OCI-LY7 (cell line): ENCODE measurements at regions of chr12 and their contacts with region 1.

Region 1: GRCh38 chr12:123232807-123233543 is at the starts of genes MPHOSPH9 and MTRFR:
- DNase-seq: peak; percentile 100
- H3K4me3 ChIP-seq: peak within 1 kb of the TSS; percentile 94
- H3K27ac ChIP-seq: peak within 1 kb of the TSS; percentile 70
- H3K4me1 ChIP-seq: peaks cover 56% of the 10 kb centered on the region
- CTCF ChIP-seq: no peak
- total RNA-seq, gene MPHOSPH9: 136 and 166 TPM in 2 replicates
- total RNA-seq, gene MTRFR: 30.1 and 35.5 TPM in 2 replicates

Region 2: DNA sequence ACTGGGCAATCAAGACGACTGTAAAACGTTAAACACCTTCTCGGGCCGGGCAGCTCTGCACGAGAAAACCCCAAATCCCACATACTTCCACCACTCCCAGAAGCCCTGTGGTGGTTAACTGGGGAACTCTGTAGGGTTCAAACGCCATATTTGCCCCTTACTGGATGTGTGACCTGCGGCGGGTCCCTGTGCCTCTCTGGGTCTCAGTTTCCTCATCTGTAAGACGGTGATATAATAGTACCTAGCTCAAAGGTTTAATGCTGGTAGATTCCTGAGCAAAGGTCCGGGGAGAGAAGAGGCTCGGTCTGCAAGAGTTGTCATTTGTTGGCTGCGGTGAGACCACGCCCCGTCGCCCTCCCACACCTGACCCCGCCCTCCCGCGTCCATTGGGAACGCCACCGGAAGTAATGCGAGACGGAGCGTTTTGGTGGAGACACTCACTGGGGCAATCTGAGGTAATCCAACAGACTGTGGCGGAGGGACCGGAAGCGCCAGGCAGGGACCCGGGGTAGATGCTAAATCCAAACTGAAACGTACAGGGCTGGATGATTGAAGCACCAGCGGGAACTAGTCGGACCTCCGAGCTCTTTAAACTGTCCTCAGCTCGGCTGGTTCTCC is 258.6 kb before region 1 on chr12:
- CTCF ChIA-PET with region 1: no interaction called
- POLR2A ChIA-PET with region 1: interaction called, 17 read pairs
- intact Hi-C with region 1: loop called (anchors 2 kb)
- DNase-seq: peak; percentile 99
- H3K4me3 ChIP-seq: peak overlapping the region; percentile 76
- H3K27ac ChIP-seq: peak overlapping the region; percentile 89
- H3K4me1 ChIP-seq: peaks cover 30% of the 10 kb centered on the region
- CTCF ChIP-seq: no peak

Region 3: DNA sequence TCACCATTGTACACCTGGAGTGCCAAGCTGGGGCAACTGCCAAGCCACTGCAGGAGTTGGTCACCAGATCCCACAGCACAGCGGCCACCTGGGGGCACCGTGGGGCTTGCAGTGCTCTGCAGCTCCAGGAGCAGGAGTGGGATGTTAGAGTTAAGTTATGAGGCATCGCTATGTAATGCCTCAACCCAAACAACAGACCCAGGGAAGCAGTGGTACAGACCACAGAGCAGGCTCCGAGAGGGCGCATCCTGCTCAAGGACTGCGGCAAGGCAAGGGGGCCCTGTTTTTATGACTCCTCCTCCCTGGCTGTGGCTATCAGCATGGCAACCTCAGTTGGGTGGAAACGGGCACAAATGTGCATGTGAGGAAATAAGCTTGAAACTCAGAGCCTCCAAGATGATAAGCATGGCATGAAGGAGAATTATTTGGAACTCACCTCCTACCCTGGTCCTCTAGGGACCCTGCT is 189.4 kb before region 1 on chr12:
- CTCF ChIA-PET with region 1: no interaction called
- POLR2A ChIA-PET with region 1: interaction called, 3 read pairs
- intact Hi-C with region 1: loop called (anchors 1 kb)
- DNase-seq: peak; percentile 79
- H3K4me3 ChIP-seq: no peak overlapping the region
- H3K27ac ChIP-seq: no peak overlapping the region
- H3K4me1 ChIP-seq: peaks cover 7% of the 10 kb centered on the region
- CTCF ChIP-seq: peak; percentile 80

Region 4: DNA sequence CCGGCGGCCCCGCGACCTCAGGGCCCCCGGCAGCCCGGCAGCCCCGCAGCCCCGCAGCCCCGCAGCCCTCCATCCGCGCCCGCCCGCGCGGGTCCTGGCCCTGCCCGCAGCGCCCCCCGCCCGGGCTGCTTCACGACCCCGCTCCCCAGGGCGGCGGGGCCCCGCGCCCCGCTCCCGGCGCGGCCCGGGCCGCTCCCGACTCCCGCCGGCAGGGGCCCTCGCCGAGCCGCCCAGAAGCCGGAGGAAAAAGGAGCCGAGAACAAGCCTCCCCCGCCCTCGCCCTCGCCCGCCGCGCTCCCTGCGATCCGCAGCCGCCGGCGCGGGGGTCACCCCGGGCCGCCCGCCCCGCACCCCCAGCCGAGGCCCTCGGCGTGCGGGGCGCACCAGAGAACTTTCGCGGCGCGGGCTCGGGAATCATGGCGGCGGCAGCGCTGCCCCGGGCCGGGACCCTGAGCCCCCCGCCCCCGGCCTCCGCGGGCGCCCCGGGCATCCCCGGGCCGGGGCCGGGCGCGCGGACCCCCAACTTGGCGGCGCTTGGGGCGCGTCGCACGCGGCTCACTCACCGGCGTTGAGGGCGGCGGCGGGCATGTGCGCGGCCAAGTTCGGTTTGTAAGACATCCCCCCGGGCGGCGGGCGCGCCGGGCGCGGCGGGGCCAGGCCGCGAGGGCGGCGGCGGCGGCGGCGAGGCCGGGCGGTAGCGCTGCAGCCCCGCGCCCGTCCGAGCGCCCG is 38.2 kb after region 1 on chr12:
- CTCF ChIA-PET with region 1: no interaction called
- POLR2A ChIA-PET with region 1: interaction called, 5 read pairs
- intact Hi-C with region 1: loop called (anchors 1 kb)
- DNase-seq: peak; percentile 83
- H3K4me3 ChIP-seq: peak overlapping the region; percentile 77
- H3K27ac ChIP-seq: no peak overlapping the region
- H3K4me1 ChIP-seq: peaks cover 21% of the 10 kb centered on the region
- CTCF ChIP-seq: no peak; the same call in 1 of the 2 replicates